ENCODE measurements at regions of chr2 and their contacts with region 1.

Region 1: GRCh38 chr2:220151341-220151740 is 523.9 kb downstream of the SLC4A3 start:
- DNase-seq: no peak
- H3K4me3 ChIP-seq: no peak overlapping the region
- CTCF ChIP-seq: no peak
- POLR2A ChIP-seq: no peak

Region 2: GRCh38 chr2:220198920-220199319 is 47.6 kb after region 1 on chr2:
- intact Hi-C with region 1: loop called (anchors 1 kb)
- DNase-seq: peak in 1 of 2 donors; percentile 44
- H3K4me3 ChIP-seq: no peak overlapping the region
- CTCF ChIP-seq: no peak
- POLR2A ChIP-seq: no peak

Measured in lower leg skin (tissue), 4 donors.